GM12878 (cell line): ENCODE measurements at regions of chr14 and their contacts with region 1.

Region 1: GRCh38 chr14:22556990-22557623 is 31.9 kb downstream of the DAD1 start:
- DNase-seq: no peak
- ATAC-seq: peak; percentile 58
- H3K4me3 ChIP-seq: peak overlapping the region; percentile 51; the same call in 1 of the 2 replicates
- H3K27ac ChIP-seq: peak overlapping the region; percentile 100
- H3K4me1 ChIP-seq: peaks cover 73% of the 10 kb centered on the region
- H3K27me3 ChIP-seq: no peaks in the 10 kb centered on the region
- CTCF ChIP-seq: peak; percentile 66 to 93 (median 86)
- EP300 ChIP-seq: no peak
- POLR2A ChIP-seq: peak; percentile 5; the same call in 1 of the 2 replicates
- RAD21 ChIP-seq: peak; percentile 74

Region 2: DNA sequence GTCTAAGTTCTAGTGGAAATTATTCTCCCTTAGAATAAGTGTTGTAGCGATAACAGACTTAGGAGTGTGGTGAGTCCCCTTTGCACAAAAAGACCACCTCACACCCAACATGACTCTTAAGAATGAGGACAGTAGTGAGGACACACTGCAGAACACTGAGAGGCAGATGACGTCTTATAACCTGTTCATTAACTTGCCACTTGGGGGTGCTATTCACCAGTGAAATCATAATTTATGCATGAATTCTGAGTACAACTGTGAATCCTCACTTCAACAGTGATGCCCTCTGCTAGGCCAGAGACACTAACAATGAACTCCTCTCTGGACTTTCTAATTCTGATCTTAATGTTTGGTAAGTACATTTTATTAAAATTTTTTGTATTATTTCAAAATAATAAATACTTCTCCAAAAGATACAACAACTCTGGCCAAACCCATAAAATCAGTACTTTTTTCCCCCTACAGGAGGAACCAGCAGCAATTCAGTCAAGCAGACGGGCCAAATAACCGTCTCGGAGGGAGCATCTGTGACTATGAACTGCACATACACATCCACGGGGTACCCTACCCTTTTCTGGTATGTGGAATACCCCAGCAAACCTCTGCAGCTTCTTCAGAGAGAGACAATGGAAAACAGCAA is 242.8 kb before region 1 on chr14:
- CTCF ChIA-PET with region 1: interaction called, 14 read pairs
- POLR2A ChIA-PET with region 1: no interaction called
- RAD21 ChIA-PET with region 1: interaction called, 6 read pairs
- SMC1A ChIA-PET with region 1: interaction called, 6 read pairs
- in situ Hi-C with region 1: no loop called
- intact Hi-C with region 1: loop called (anchors 5 kb)
- DNase-seq: peak; percentile 48
- ATAC-seq: peak; percentile 98
- H3K4me3 ChIP-seq: no peak overlapping the region
- H3K27ac ChIP-seq: no peak overlapping the region
- H3K4me1 ChIP-seq: no peaks in the 10 kb centered on the region
- H3K27me3 ChIP-seq: no peaks in the 10 kb centered on the region
- CTCF ChIP-seq: peak; percentile 55 to 80 (median 69); a peak in 5 of 6 replicates
- EP300 ChIP-seq: no peak
- POLR2A ChIP-seq: no peak
- RAD21 ChIP-seq: peak; percentile 75

Region 3: GRCh38 chr14:22466491-22466890 is 90.6 kb before region 1 on chr14:
- CTCF ChIA-PET with region 1: interaction called, 236 read pairs
- POLR2A ChIA-PET with region 1: interaction called, 3 read pairs
- RAD21 ChIA-PET with region 1: interaction called, 33 read pairs
- SMC1A ChIA-PET with region 1: interaction called, 18 read pairs
- in situ Hi-C with region 1: no loop called
- intact Hi-C with region 1: no loop called
- DNase-seq: no peak
- ATAC-seq: peak; percentile 71
- H3K4me3 ChIP-seq: no peak overlapping the region
- H3K27ac ChIP-seq: peak overlapping the region; percentile 86
- H3K4me1 ChIP-seq: peaks cover 52% of the 10 kb centered on the region
- H3K27me3 ChIP-seq: no peaks in the 10 kb centered on the region
- CTCF ChIP-seq: 0 out of 6 replicates have a peak, but pooled peaks of 1 of the 3 experiments have one; percentile 12
- EP300 ChIP-seq: no peak
- POLR2A ChIP-seq: no peak
- RAD21 ChIP-seq: peak; percentile 40; the same call in 1 of the 2 replicates

Region 4: DNA sequence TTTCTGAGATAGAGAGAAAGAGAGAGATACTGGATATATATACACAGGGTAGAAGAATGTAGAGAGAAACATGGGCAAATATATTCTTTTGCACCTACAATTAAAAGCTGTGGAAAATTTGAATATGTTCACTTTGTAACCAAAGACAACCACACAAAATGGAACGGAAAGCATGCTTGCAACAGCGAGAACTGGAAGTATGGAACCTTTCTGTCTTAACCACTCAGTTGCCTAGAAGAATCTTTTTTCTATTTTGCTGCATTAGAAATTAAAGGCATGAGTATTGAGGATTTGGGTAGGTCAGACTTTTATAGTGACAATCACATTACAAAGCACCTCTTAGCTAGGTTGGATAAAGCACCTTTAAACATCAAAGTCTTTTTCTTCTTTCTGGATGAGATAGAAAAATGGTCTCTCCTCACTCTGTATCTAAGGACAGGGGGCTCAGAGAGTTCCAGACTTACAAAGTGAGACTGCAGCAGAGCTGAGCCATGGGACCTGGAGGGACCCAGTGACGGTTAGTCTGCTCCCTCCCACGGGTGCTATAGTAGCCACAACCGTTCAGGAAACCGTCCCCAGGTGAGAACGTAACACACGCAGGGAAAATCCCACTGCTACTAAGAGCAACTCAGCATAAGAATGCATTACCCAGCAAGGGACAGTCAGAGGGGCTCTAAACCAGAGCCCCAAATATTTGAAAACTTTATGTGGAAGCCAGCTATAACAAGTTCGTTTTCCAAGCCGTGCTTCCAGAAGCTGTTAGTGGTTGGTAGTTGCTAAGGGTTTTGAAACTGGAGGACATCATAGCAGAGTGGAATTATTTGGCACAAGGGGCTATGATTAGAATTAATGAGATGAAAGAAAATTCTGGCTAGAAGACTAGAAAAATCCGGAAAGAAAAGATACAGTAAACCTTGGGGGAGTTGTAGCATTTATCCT is 65.2 kb before region 1 on chr14:
- CTCF ChIA-PET with region 1: interaction called, 19 read pairs
- POLR2A ChIA-PET with region 1: interaction called, 16 read pairs
- RAD21 ChIA-PET with region 1: interaction called, 37 read pairs
- SMC1A ChIA-PET with region 1: interaction called, 40 read pairs
- in situ Hi-C with region 1: no loop called
- intact Hi-C with region 1: loop called (anchors 1 kb)
- DNase-seq: no peak
- ATAC-seq: peak; percentile 57
- H3K4me3 ChIP-seq: peak overlapping the region; percentile 45
- H3K27ac ChIP-seq: peak overlapping the region; percentile 98
- H3K4me1 ChIP-seq: peaks cover 86% of the 10 kb centered on the region
- H3K27me3 ChIP-seq: no peaks in the 10 kb centered on the region
- CTCF ChIP-seq: no peak
- EP300 ChIP-seq: peak; percentile 69 to 92; a peak in 3 of 4 replicates
- POLR2A ChIP-seq: peak; percentile 68
- RAD21 ChIP-seq: peak; percentile 26; the same call in 1 of the 2 replicates

Region 5: DNA sequence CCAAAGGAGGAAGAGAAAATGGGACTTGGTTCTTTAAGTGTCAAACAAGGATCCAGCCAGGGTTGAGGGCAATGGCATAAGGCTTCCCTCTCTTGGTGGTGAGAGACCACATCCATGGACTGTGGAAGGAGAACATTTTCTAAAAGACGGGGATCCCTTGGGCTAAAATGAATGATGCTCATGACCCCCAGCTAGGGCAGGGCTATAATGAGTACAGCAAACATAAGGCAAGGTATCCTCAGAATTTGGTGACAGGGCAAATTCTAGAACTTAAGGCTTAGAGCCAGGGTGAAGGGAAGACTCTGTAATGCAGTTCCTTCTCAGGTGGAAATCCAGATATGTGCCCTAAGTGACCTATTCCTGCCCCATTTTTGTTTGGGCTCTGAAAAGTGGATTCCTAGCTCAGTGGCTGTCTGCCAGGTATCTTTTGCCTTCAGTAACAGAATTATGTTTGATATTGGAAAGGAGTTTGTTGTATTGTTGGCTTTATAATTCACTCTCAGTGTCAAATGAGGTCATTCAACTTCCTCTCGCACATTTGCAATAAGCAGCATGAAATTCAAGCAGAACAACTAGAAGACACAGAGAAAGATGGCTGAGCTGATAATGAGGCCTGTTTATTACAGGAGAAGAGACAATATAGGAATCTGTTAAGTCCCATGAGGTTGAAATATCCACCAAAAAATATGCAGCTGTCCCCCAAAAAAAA is 44.8 kb before region 1 on chr14:
- CTCF ChIA-PET with region 1: interaction called, 22 read pairs
- POLR2A ChIA-PET with region 1: interaction called, 43 read pairs
- RAD21 ChIA-PET with region 1: interaction called, 64 read pairs
- SMC1A ChIA-PET with region 1: interaction called, 82 read pairs
- in situ Hi-C with region 1: no loop called
- intact Hi-C with region 1: loop called (anchors 1 kb)
- DNase-seq: no peak
- ATAC-seq: no peak
- H3K4me3 ChIP-seq: no peak overlapping the region
- H3K27ac ChIP-seq: peak overlapping the region; percentile 98
- H3K4me1 ChIP-seq: peaks cover 85% of the 10 kb centered on the region
- H3K27me3 ChIP-seq: no peaks in the 10 kb centered on the region
- CTCF ChIP-seq: no peak
- EP300 ChIP-seq: no peak
- POLR2A ChIP-seq: no peak
- RAD21 ChIP-seq: no peak

Region 6: GRCh38 chr14:22536853-22537338 is 20.2 kb before region 1 on chr14:
- CTCF ChIA-PET with region 1: interaction called, 58 read pairs
- POLR2A ChIA-PET with region 1: interaction called, 74 read pairs
- RAD21 ChIA-PET with region 1: interaction called, 48 read pairs
- SMC1A ChIA-PET with region 1: interaction called, 105 read pairs
- in situ Hi-C with region 1: no loop called
- intact Hi-C with region 1: no loop called
- DNase-seq: peak; percentile 94
- ATAC-seq: peak; percentile 75
- H3K4me3 ChIP-seq: peak overlapping the region; percentile 41; the same call in 1 of the 2 replicates
- H3K27ac ChIP-seq: peak overlapping the region; percentile 97
- H3K4me1 ChIP-seq: peaks cover 73% of the 10 kb centered on the region
- H3K27me3 ChIP-seq: no peaks in the 10 kb centered on the region
- CTCF ChIP-seq: no peak
- EP300 ChIP-seq: peak; percentile 75 to 82; a peak in 3 of 4 replicates
- POLR2A ChIP-seq: peak; percentile 59
- RAD21 ChIP-seq: peak; percentile 35; the same call in 1 of the 2 replicates

Region 7: GRCh38 chr14:22671622-22672021 is 114.5 kb after region 1 on chr14:
- CTCF ChIA-PET with region 1: no interaction called
- POLR2A ChIA-PET with region 1: no interaction called
- RAD21 ChIA-PET with region 1: no interaction called
- SMC1A ChIA-PET with region 1: no interaction called
- in situ Hi-C with region 1: no loop called
- intact Hi-C with region 1: no loop called
- DNase-seq: no peak
- ATAC-seq: peak; percentile 69
- H3K4me3 ChIP-seq: no peak overlapping the region
- H3K27ac ChIP-seq: no peak overlapping the region
- H3K4me1 ChIP-seq: no peaks in the 10 kb centered on the region
- H3K27me3 ChIP-seq: no peaks in the 10 kb centered on the region
- CTCF ChIP-seq: no peak
- EP300 ChIP-seq: no peak
- POLR2A ChIP-seq: no peak
- RAD21 ChIP-seq: no peak

Region 8: GRCh38 chr14:22829661-22830442 is 272.7 kb after region 1 on chr14 and contains the start of gene MRPL52:
- CTCF ChIA-PET with region 1: no interaction called
- POLR2A ChIA-PET with region 1: no interaction called
- RAD21 ChIA-PET with region 1: no interaction called
- SMC1A ChIA-PET with region 1: no interaction called
- in situ Hi-C with region 1: no loop called
- intact Hi-C with region 1: no loop called
- DNase-seq: no peak
- ATAC-seq: peak; percentile 95
- H3K4me3 ChIP-seq: peak within 1 kb of the TSS; percentile 98
- H3K27ac ChIP-seq: peak within 1 kb of the TSS; percentile 41
- H3K4me1 ChIP-seq: peaks cover 12% of the 10 kb centered on the region
- H3K27me3 ChIP-seq: no peaks in the 10 kb centered on the region
- CTCF ChIP-seq: no peak
- EP300 ChIP-seq: no peak
- POLR2A ChIP-seq: peak; percentile 80
- RAD21 ChIP-seq: no peak
- polyA plus RNA-seq, gene MRPL52: 51.7 to 142 TPM